ENCODE measurements at regions of chr10 and their contacts with region 1.

Region 1: GRCh38 chr10:110225756-110226542 is 18.5 kb downstream of the MXI1 start:
- DNase-seq: peak; percentile 83
- ATAC-seq: peak; percentile 87
- H3K4me3 ChIP-seq: peak overlapping the region; percentile 76 to 82 (median 77)
- H3K27ac ChIP-seq: peak overlapping the region; percentile 84
- H3K4me1 ChIP-seq: peaks cover 22% of the 10 kb centered on the region
- H3K27me3 ChIP-seq: no peaks in the 10 kb centered on the region
- CTCF ChIP-seq: peak; percentile 70
- EP300 ChIP-seq: no peak
- POLR2A ChIP-seq: peak in 1 of 2 experiments; percentile 52; a peak in 1 of 4 replicates
- RAD21 ChIP-seq: peak; percentile 74

Region 2: GRCh38 chr10:110210674-110211464 is 15.1 kb before region 1 on chr10:
- CTCF ChIA-PET with region 1: no interaction called
- POLR2A ChIA-PET with region 1: interaction called, 12 read pairs
- in situ Hi-C with region 1: no loop called
- intact Hi-C with region 1: loop called (anchors 2 kb)
- DNase-seq: peak; percentile 95
- ATAC-seq: peak; percentile 77
- H3K4me3 ChIP-seq: peak overlapping the region; percentile 69 to 90 (median 72)
- H3K27ac ChIP-seq: peak overlapping the region; percentile 70
- H3K4me1 ChIP-seq: peaks cover 54% of the 10 kb centered on the region
- H3K27me3 ChIP-seq: peaks cover 0 to 4% of the 10 kb centered on the region in 2 experiments; a peak in 1 of 5 replicates
- CTCF ChIP-seq: peak; percentile 13; the same call in 1 of the 2 replicates
- EP300 ChIP-seq: peak in 1 of 2 experiments; percentile 37; a peak in 1 of 4 replicates
- POLR2A ChIP-seq: peak in 1 of 2 experiments; percentile 52; a peak in 2 of 4 replicates
- RAD21 ChIP-seq: no peak

Region 3: DNA sequence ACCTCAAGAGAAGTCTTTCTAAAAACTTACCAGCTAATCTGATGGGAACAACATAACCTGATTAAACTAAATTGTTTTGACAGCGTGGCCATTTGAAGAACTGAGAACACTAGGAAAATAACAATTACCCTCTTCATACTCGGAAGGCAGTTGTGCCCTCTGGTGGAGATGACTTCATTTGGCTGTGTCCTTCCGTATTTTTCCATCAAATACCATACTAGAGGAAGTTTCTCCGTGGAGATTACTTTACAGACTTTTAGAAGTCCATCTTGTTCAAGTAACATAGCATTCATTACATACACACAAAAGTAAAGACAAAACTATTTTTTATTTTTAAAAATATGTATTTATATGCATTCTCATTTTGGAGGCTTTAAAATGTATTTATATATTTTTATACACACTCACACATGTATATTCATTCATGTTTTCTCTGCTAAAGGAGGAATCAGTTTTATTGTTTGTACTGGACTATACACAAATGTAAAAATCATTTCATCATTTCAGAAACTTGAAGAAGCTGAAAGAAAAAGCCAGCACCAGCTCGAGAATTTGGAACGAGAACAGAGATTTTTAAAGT is 53.5 kb after region 1 on chr10:
- CTCF ChIA-PET with region 1: no interaction called
- POLR2A ChIA-PET with region 1: no interaction called
- in situ Hi-C with region 1: no loop called
- intact Hi-C with region 1: loop called (anchors 1 kb)
- DNase-seq: peak; percentile 65
- ATAC-seq: peak; percentile 71
- H3K4me3 ChIP-seq: no peak overlapping the region
- H3K27ac ChIP-seq: no peak overlapping the region
- H3K4me1 ChIP-seq: peaks cover 9% of the 10 kb centered on the region
- H3K27me3 ChIP-seq: no peaks in the 10 kb centered on the region; a peak in 1 of 5 replicates
- CTCF ChIP-seq: peak; percentile 78
- EP300 ChIP-seq: no peak
- POLR2A ChIP-seq: no peak
- RAD21 ChIP-seq: peak; percentile 68; the same call in 1 of the 2 replicates

Region 4: DNA sequence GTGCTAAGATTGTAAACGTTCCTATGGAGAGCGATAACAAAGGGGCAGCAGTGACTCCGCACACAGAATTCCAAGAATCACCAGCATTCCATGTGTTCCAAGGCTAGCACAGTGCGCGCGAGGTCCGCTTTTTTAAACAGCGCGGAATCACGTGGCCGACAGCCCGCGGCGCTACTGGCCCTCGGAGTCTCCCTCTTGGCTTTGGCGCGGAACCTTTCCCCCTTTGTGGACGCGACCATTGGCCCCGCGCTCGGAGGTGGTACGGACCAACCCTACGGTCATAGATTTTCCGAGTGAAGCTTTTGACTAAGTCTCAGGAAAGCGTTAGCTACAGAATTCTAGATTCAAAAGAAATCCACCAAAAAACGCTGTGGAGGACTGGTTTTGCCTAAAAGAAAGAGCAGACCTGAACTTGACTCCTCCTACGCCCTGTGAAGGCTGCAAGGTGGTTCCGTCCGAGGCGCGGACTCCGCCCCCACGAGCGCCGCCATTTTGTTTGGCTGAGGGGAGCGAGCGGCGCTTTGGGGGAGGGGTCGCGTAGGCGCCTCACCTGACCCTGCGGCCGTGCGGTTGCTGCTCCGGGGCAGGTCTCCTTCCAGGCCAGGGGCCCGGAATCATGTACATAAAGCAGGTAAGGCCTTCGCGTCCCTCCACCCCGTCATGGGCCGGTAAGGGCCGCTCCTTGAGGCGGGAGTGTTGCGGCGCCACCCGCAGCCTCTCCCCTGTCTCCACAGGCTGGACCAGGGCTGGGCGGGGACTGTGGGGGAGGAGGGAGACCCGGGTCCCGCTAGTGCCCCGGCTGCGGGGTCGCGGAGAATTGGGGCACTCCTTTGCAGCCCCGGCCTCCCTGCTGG is 341.5 kb after region 1 on chr10 and contains the start of gene SMC3:
- CTCF ChIA-PET with region 1: no interaction called
- POLR2A ChIA-PET with region 1: no interaction called
- in situ Hi-C with region 1: no loop called
- intact Hi-C with region 1: loop called (anchors 5 kb)
- DNase-seq: peak; percentile 94
- ATAC-seq: peak; percentile 87
- H3K4me3 ChIP-seq: peak within 1 kb of the TSS; percentile 84 to 93 (median 84)
- H3K27ac ChIP-seq: peak within 1 kb of the TSS; percentile 93
- H3K4me1 ChIP-seq: peaks cover 43% of the 10 kb centered on the region
- H3K27me3 ChIP-seq: peaks cover under 1 to 10% of the 10 kb centered on the region in 2 experiments; a peak in 2 of 5 replicates
- CTCF ChIP-seq: 0 out of 2 replicates have a peak, but pooled peaks have one; percentile 4
- EP300 ChIP-seq: peak; percentile 8 to 83; a peak in 1 of 4 replicates
- POLR2A ChIP-seq: peak; percentile 58 to 79
- RAD21 ChIP-seq: no peak
- total RNA-seq, gene SMC3: 48.0 and 85.7 TPM in 2 replicates